B cell (primary cell): ENCODE measurements at regions of chr1 and their contacts with region 1.

Region 1: GRCh38 chr1:43367904-43368645 is at the start of gene ELOVL1:
- DNase-seq: peak; percentile 94
- ATAC-seq: peak; percentile 88
- H3K4me3 ChIP-seq: peak within 1 kb of the TSS; percentile 64 to 90 (median 81)
- H3K4me3 Mint-ChIP-seq: peak within 1 kb of the TSS; percentile 96
- H3K27ac ChIP-seq: peak within 1 kb of the TSS; percentile 74 to 96
- H3K27ac Mint-ChIP-seq: peak within 1 kb of the TSS; percentile 97
- H3K4me1 ChIP-seq: peaks cover 18 to 26% of the 10 kb centered on the region in 2 donors
- H3K4me1 Mint-ChIP-seq: peaks cover 45% of the 10 kb centered on the region
- H3K27me3 ChIP-seq: no peaks in the 10 kb centered on the region
- H3K27me3 Mint-ChIP-seq: no peaks in the 10 kb centered on the region
- CTCF ChIP-seq: peak; percentile 13
- total RNA-seq, gene ELOVL1: 65.4 and 66.6 TPM in 2 replicates

Region 2: DNA sequence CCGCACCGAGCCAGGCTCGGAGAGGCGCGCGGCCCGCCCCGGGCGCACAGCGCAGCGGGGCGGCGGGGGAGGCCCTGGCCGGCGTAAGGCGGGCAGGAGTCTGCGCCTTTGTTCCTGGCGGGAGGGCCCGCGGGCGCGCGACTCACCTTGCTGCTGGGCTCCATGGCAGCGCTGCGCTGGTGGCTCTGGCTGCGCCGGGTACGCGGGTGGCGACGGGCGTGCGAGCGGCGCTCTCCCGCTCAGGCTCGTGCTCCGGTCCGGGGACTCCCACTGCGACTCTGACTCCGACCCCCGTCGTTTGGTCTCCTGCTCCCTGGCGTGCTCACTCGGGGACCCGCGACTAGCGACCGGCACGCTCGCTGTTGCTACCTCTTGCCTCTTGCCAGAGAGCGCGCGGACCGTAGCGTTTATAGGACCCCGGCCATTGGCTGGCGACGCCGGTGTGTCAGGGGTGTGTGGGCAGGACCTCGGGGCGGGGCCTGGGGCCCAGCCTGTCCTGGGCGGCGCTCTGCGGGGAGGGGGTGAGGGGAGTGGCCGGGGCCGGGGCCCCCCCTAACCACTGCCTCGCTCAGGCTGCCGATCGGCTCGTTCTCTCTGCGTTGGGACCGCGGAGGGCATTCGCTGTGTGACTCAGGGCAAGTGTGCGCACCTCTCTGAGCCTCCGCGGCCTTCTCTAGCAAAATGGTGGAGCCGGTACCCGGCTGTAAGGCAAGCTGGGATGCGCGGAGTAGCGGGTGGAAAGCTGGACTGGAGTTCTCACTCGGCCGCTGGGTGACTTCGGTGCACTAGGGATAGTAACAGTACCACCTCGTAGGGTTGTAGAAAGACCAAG is 409.4 kb before region 1 on chr1 and contains the start of gene SLC2A1:
- CTCF ChIA-PET with region 1: no interaction called
- POLR2A ChIA-PET with region 1: no interaction called
- intact Hi-C with region 1: loop called (anchors 10 kb)
- DNase-seq: peak; percentile 97
- ATAC-seq: peak; percentile 89
- H3K4me3 ChIP-seq: peak within 1 kb of the TSS; percentile 76 to 93 (median 87)
- H3K4me3 Mint-ChIP-seq: peak within 1 kb of the TSS; percentile 97
- H3K27ac ChIP-seq: peak within 1 kb of the TSS; percentile 59 to 86
- H3K27ac Mint-ChIP-seq: peak within 1 kb of the TSS; percentile 99
- H3K4me1 ChIP-seq: peaks cover 64 to 85% of the 10 kb centered on the region in 2 donors
- H3K4me1 Mint-ChIP-seq: peaks cover 73% of the 10 kb centered on the region
- H3K27me3 ChIP-seq: no peaks in the 10 kb centered on the region
- H3K27me3 Mint-ChIP-seq: no peaks in the 10 kb centered on the region
- CTCF ChIP-seq: no peak
- total RNA-seq, gene SLC2A1: 240 and 241 TPM in 2 replicates

Region 3: GRCh38 chr1:43238085-43238484 is 130.0 kb before region 1 on chr1:
- CTCF ChIA-PET with region 1: interaction called, 9 read pairs
- POLR2A ChIA-PET with region 1: interaction called, 12 read pairs
- intact Hi-C with region 1: loop called (anchors 1 kb)
- DNase-seq: peak; percentile 40
- ATAC-seq: no peak
- H3K4me3 ChIP-seq: no peak overlapping the region
- H3K4me3 Mint-ChIP-seq: no peak overlapping the region
- H3K27ac ChIP-seq: no peak overlapping the region
- H3K27ac Mint-ChIP-seq: peak overlapping the region; percentile 90
- H3K4me1 ChIP-seq: peaks cover 27 to 31% of the 10 kb centered on the region in 2 donors
- H3K4me1 Mint-ChIP-seq: peaks cover 35% of the 10 kb centered on the region
- H3K27me3 ChIP-seq: peaks cover 0 to 2% (median 0%) of the 10 kb centered on the region in 4 experiments
- H3K27me3 Mint-ChIP-seq: peaks cover 4% of the 10 kb centered on the region
- CTCF ChIP-seq: no peak

Region 4: DNA sequence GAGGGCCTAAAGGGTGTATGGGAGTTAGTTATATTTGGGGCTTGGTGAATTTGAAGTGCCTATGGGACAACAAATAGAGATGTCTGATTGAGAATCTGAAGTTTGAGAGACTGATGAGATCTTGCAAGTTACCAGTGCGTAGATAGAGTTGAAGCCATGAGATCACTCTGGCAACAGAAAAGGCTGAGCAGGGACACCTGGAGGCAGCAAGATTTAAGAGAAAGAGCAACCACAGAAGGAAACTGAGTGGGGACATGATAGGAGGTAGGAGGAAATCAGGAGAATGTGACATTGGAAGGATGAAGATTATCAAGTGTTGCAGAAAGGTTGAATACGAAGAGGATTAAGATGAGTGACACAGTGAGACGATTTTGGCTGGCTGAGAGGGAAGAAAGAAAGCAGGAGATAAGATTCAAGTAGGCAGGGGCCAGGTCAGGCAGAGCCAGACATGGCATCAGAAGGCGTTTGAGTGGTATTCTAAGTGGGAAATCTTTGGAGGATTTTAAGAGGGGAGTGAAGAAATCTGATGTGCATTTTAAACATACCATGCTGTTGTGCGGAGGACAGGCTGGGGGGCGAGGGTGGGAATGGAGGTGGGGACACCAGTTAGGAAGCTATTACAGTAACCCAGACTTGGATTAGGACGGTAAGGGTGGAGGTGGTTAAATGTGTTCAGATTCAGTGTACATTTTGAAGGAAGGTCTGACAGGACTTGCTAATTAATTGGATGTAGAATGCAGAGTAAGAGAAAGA is 33.4 kb before region 1 on chr1:
- CTCF ChIA-PET with region 1: no interaction called
- POLR2A ChIA-PET with region 1: no interaction called
- intact Hi-C with region 1: no loop called
- DNase-seq: no peak
- ATAC-seq: no peak
- H3K4me3 ChIP-seq: no peak overlapping the region
- H3K4me3 Mint-ChIP-seq: no peak overlapping the region
- H3K27ac ChIP-seq: no peak overlapping the region
- H3K27ac Mint-ChIP-seq: no peak overlapping the region
- H3K4me1 ChIP-seq: no peaks in the 10 kb centered on the region
- H3K4me1 Mint-ChIP-seq: no peaks in the 10 kb centered on the region
- H3K27me3 ChIP-seq: peaks cover 0 to 3% (median 0%) of the 10 kb centered on the region in 4 experiments
- H3K27me3 Mint-ChIP-seq: no peaks in the 10 kb centered on the region
- CTCF ChIP-seq: no peak

Region 5: DNA sequence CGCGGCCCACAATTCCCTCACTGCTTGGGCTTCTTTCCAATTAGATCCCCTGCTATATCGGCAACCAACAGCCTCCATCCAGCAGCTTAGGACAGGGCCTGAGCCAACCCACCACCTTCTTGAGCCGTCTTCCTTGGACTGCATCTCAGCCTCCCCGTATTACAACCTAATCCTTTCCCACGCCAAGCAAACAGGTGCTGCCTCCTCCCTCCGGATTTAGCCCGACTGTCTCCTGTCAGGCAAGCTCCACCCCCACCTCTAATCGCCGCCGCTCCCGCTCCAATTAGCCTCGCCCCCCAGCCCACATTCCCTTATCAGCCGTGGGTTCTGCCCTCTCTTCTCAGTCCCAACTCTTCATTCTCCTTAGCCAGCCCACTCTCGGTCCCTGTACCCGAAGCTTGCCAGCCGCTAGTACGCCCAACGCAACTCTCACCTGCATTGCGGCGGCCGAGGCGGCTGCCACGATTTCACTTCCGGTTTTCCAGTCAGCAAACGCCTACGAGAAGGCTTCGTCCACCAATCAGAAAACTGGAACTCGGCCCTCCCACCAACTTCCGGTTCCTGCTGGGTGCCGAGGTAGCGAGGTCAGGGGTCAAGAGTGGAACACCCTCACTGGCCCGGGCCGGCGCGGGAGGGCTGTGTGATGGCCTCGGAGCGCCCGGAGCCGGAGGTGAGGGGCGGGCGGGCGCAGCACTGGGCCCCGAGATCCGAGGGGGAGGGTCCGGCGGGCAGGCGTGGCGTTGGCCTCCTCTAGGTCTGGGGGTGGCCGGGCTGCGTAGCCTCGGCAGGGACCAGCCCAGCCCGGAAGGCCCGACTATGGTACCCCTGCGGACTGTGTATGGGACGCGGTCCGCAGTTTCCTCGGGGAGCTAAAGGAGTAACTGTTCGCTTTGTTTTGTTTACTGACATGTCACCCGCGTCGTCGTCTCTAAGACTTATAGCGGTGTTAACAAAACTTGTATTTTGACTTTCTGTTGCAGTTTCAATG is 21.5 kb after region 1 on chr1 and contains the starts of genes MED8 and SZT2:
- CTCF ChIA-PET with region 1: interaction called, 9 read pairs
- POLR2A ChIA-PET with region 1: interaction called, 23 read pairs
- intact Hi-C with region 1: loop called (anchors 1 kb)
- DNase-seq: peak; percentile 95
- ATAC-seq: peak; percentile 96
- H3K4me3 ChIP-seq: peak within 1 kb of the TSS; percentile 82 to 96 (median 92)
- H3K4me3 Mint-ChIP-seq: peak within 1 kb of the TSS; percentile 100
- H3K27ac ChIP-seq: peak within 1 kb of the TSS; percentile 63 to 87
- H3K27ac Mint-ChIP-seq: peak within 1 kb of the TSS; percentile 98
- H3K4me1 ChIP-seq: peaks cover 20 to 24% of the 10 kb centered on the region in 2 donors
- H3K4me1 Mint-ChIP-seq: peaks cover 41% of the 10 kb centered on the region
- H3K27me3 ChIP-seq: no peaks in the 10 kb centered on the region
- H3K27me3 Mint-ChIP-seq: no peaks in the 10 kb centered on the region
- CTCF ChIP-seq: no peak
- total RNA-seq, gene MED8: 30.0 and 31.8 TPM in 2 replicates
- total RNA-seq, gene SZT2: 193 and 197 TPM in 2 replicates

Region 6: GRCh38 chr1:43454266-43455011 is 86.4 kb after region 1 on chr1:
- CTCF ChIA-PET with region 1: no interaction called
- POLR2A ChIA-PET with region 1: interaction called, 3 read pairs
- intact Hi-C with region 1: loop called (anchors 1 kb)
- DNase-seq: peak; percentile 72
- ATAC-seq: peak; percentile 76
- H3K4me3 ChIP-seq: peak overlapping the region; percentile 54 to 83 (median 72)
- H3K4me3 Mint-ChIP-seq: peak overlapping the region; percentile 97
- H3K27ac ChIP-seq: no peak overlapping the region
- H3K27ac Mint-ChIP-seq: peak overlapping the region; percentile 92
- H3K4me1 ChIP-seq: peaks cover 8 to 9% of the 10 kb centered on the region in 2 donors
- H3K4me1 Mint-ChIP-seq: peaks cover 21% of the 10 kb centered on the region
- H3K27me3 ChIP-seq: peaks cover 0 to 12% (median 9%) of the 10 kb centered on the region in 4 experiments
- H3K27me3 Mint-ChIP-seq: peaks cover 21% of the 10 kb centered on the region
- CTCF ChIP-seq: no peak

Region 7: GRCh38 chr1:44029906-44030604 is 662.0 kb after region 1 on chr1:
- CTCF ChIA-PET with region 1: no interaction called
- POLR2A ChIA-PET with region 1: no interaction called
- intact Hi-C with region 1: loop called (anchors 5 kb)
- DNase-seq: peak; percentile 94
- ATAC-seq: peak; percentile 80
- H3K4me3 ChIP-seq: peak overlapping the region; percentile 17 to 87 (median 81)
- H3K4me3 Mint-ChIP-seq: peak overlapping the region; percentile 98
- H3K27ac ChIP-seq: peak overlapping the region; percentile 71 to 72
- H3K27ac Mint-ChIP-seq: peak overlapping the region; percentile 96
- H3K4me1 ChIP-seq: peaks cover 10 to 31% of the 10 kb centered on the region in 2 donors
- H3K4me1 Mint-ChIP-seq: peaks cover 37% of the 10 kb centered on the region
- H3K27me3 ChIP-seq: peaks cover 0 to 4% (median 0%) of the 10 kb centered on the region in 4 experiments
- H3K27me3 Mint-ChIP-seq: no peaks in the 10 kb centered on the region
- CTCF ChIP-seq: no peak